ENCODE measurements at regions of chrX and their contacts with region 1.

Region 1: DNA sequence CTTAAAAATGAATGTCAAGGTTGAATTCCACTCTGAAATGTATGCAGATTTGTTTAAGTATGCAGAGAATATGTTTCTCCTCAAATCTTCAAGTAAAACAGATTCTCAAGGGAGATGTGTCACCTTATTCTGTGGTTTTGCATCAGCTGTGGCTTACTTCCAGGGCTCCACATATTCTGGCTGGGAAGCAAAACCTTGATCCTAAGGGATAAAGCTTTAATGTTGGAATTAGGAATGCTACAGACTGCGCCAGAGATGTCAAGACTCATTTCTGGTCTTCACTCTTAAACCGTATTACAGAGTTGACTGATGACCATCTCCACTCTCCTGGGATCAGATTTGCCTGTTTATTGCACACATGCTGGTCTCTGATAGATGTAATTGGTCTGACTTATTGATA is 143.9 kb upstream of the DIPK2B start:
- DNase-seq: no peak
- H3K4me3 ChIP-seq: no peak overlapping the region
- H3K27ac ChIP-seq: no peak overlapping the region
- H3K4me1 ChIP-seq: no peaks in the 10 kb centered on the region
- H3K27me3 ChIP-seq: no peaks in the 10 kb centered on the region
- CTCF ChIP-seq: no peak
- EP300 ChIP-seq: no peak
- POLR2A ChIP-seq: no peak

Region 2: GRCh38 chrX:45400027-45400779 is 55.6 kb after region 1 on chrX:
- in situ Hi-C with region 1: no loop called
- intact Hi-C with region 1: no loop called
- DNase-seq: no peak
- H3K4me3 ChIP-seq: no peak overlapping the region
- H3K27ac ChIP-seq: no peak overlapping the region
- H3K4me1 ChIP-seq: no peaks in the 10 kb centered on the region
- H3K27me3 ChIP-seq: no peaks in the 10 kb centered on the region
- CTCF ChIP-seq: no peak
- EP300 ChIP-seq: no peak
- POLR2A ChIP-seq: no peak

Region 3: GRCh38 chrX:46408553-46409407 is 1064.2 kb after region 1 on chrX:
- in situ Hi-C with region 1: loop called in 1 of 4 experiments (anchors 25 kb)
- intact Hi-C with region 1: no loop called
- DNase-seq: peak; percentile 78
- H3K4me3 ChIP-seq: no peak overlapping the region
- H3K27ac ChIP-seq: no peak overlapping the region
- H3K4me1 ChIP-seq: no peaks in the 10 kb centered on the region
- H3K27me3 ChIP-seq: no peaks in the 10 kb centered on the region
- CTCF ChIP-seq: peak; percentile 59 to 88 (median 67)
- EP300 ChIP-seq: no peak
- POLR2A ChIP-seq: no peak